Esophagus muscularis mucosa (tissue), 4 donors: ENCODE measurements at regions of chr1 and their contacts with region 1.

Region 1: GRCh38 chr1:112715264-112716053 is at the start of gene PPM1J:
- DNase-seq: peak; percentile 99
- H3K4me3 ChIP-seq: peak within 1 kb of the TSS; percentile 68 to 81 (median 71)
- H3K27ac ChIP-seq: peak within 1 kb of the TSS; percentile 65 to 81 (median 75)
- H3K4me1 ChIP-seq: peaks cover 18 to 44% (median 33%) of the 10 kb centered on the region in 4 donors
- H3K27me3 ChIP-seq: peaks cover 0 to 15% (median 0%) of the 10 kb centered on the region in 4 donors
- CTCF ChIP-seq: peak in 1 of 3 experiments; percentile 6
- EP300 ChIP-seq: no peak
- POLR2A ChIP-seq: no peak
- total RNA-seq, gene PPM1J: 0.42 to 3.6 (median 2.3) TPM

Region 2: GRCh38 chr1:112793631-112794565 is 78.4 kb after region 1 on chr1:
- intact Hi-C with region 1: no loop called
- DNase-seq: no peak
- H3K4me3 ChIP-seq: no peak overlapping the region
- H3K27ac ChIP-seq: no peak overlapping the region
- H3K4me1 ChIP-seq: no peaks in the 10 kb centered on the region
- H3K27me3 ChIP-seq: peaks cover 0 to 3% (median 0%) of the 10 kb centered on the region in 4 donors
- CTCF ChIP-seq: no peak
- EP300 ChIP-seq: no peak
- POLR2A ChIP-seq: no peak

Region 3: DNA sequence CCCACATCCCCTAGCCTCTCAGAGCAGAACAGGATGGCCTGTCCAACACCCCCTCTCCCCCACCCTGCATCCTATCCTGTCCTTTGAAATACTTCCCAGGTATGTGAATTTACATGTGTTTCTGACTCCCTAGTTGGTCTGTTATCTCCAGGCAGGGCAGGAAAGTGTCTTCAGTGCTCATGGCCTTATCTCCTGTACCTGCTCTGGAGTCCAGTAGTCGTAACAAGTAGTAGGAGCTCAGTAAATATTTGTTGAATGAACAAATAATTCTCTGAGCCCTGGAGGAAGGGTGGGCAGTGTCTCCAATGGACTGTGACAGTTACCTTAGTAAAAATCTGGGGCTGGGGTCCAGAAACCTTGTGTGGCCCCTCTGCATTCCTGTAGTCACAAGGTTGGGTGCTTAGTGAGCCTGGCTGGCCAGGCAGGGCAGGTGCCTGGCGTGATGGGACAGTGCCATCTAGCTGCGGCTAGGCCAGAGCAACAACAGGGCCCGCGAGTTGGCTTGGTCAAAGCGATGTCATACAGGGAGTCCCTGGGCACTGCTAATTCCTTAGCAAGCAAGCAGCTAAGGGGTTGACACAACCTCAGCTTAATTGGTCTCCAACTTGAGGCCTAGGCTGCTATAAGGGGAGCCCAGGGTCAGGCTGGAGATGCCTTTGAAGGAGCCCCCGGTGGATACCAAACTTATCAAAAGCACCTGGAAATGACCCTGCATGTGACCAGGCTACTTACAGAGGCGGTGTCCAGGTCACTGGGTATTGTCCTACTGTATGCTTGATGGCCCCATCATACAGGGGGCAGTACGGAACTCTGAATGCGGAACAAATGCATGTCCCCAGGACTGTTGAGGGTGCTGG is 88.7 kb after region 1 on chr1:
- intact Hi-C with region 1: loop called (anchors 2 kb)
- DNase-seq: no peak
- H3K4me3 ChIP-seq: no peak overlapping the region
- H3K27ac ChIP-seq: no peak overlapping the region
- H3K4me1 ChIP-seq: no peaks in the 10 kb centered on the region
- H3K27me3 ChIP-seq: no peaks in the 10 kb centered on the region
- CTCF ChIP-seq: peak; percentile 51 to 59 (median 51)
- EP300 ChIP-seq: no peak
- POLR2A ChIP-seq: no peak

Region 4: GRCh38 chr1:112955781-112956543 is 240.5 kb after region 1 on chr1 and contains the start of gene SLC16A1:
- intact Hi-C with region 1: loop called (anchors 5 kb)
- DNase-seq: peak; percentile 97
- H3K4me3 ChIP-seq: peak within 1 kb of the TSS; percentile 74 to 82 (median 78)
- H3K27ac ChIP-seq: peak within 1 kb of the TSS; percentile 85 to 94 (median 93)
- H3K4me1 ChIP-seq: peaks cover 21 to 62% (median 60%) of the 10 kb centered on the region in 4 donors
- H3K27me3 ChIP-seq: no peaks in the 10 kb centered on the region
- CTCF ChIP-seq: peak; percentile 14 to 42 (median 31)
- EP300 ChIP-seq: no peak
- POLR2A ChIP-seq: peak; percentile 48
- total RNA-seq, gene SLC16A1: 29.9 to 40.1 (median 33.7) TPM

Region 5: GRCh38 chr1:113042285-113043143 is 327.1 kb after region 1 on chr1:
- intact Hi-C with region 1: loop called (anchors 10 kb)
- DNase-seq: peak; percentile 93
- H3K4me3 ChIP-seq: no peak overlapping the region
- H3K27ac ChIP-seq: no peak overlapping the region
- H3K4me1 ChIP-seq: peaks cover 8 to 13% (median 13%) of the 10 kb centered on the region in 4 donors
- H3K27me3 ChIP-seq: no peaks in the 10 kb centered on the region
- CTCF ChIP-seq: peak; percentile 68 to 75 (median 74)
- EP300 ChIP-seq: no peak
- POLR2A ChIP-seq: no peak

Region 6: GRCh38 chr1:113072757-113073478 is 357.5 kb after region 1 on chr1 and contains the start of gene LRIG2:
- intact Hi-C with region 1: loop called (anchors 5 kb)
- DNase-seq: peak; percentile 99
- H3K4me3 ChIP-seq: peak within 1 kb of the TSS; percentile 66 to 85 (median 78)
- H3K27ac ChIP-seq: peak within 1 kb of the TSS; percentile 89 to 94 (median 94)
- H3K4me1 ChIP-seq: peaks cover 23 to 45% (median 39%) of the 10 kb centered on the region in 4 donors
- H3K27me3 ChIP-seq: no peaks in the 10 kb centered on the region
- CTCF ChIP-seq: peak; percentile 80 to 90 (median 82)
- EP300 ChIP-seq: no peak
- POLR2A ChIP-seq: peak; percentile 50
- total RNA-seq, gene LRIG2: 8.9 to 13.9 (median 11.3) TPM

Region 7: GRCh38 chr1:113088972-113089371 is 373.5 kb after region 1 on chr1:
- intact Hi-C with region 1: no loop called
- DNase-seq: no peak
- H3K4me3 ChIP-seq: no peak overlapping the region
- H3K27ac ChIP-seq: peak overlapping the region; percentile 4 to 58 (median 52)
- H3K4me1 ChIP-seq: peaks cover 5 to 33% (median 24%) of the 10 kb centered on the region in 4 donors
- H3K27me3 ChIP-seq: no peaks in the 10 kb centered on the region
- CTCF ChIP-seq: no peak
- EP300 ChIP-seq: no peak
- POLR2A ChIP-seq: no peak